HepG2 (cell line): ENCODE measurements at regions of chr1 and their contacts with region 1.

Region 1: DNA sequence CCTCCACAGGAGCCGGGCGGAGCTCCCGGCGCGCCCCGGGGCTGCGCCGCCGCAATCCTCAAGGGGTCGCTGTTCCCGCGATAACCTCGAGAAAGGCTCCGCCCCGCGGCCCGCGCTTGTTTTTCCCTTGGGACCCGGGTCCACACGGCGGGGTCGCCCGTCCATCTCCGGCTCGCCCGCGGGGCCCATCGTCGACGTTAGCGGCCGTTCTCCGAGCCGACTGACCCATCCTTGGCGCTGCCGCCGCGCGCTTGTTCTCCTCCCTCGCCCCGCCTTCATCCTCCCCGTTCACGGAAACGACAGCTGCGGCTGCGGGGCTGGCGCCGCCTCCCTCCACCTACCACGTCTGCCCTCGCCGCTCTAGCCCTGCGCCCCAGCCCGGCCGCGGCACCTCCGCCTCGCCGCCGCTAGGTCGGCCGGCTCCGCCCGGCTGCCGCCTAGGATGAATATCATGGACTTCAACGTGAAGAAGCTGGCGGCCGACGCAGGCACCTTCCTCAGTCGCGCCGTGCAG is at the start of gene SH3GLB1:
- DNase-seq: peak; percentile 74
- ATAC-seq: peak; percentile 97
- H3K4me3 ChIP-seq: peak within 1 kb of the TSS; percentile 84 to 97 (median 95)
- H3K27ac ChIP-seq: peak within 1 kb of the TSS; percentile 90
- H3K4me1 ChIP-seq: peaks cover 34% of the 10 kb centered on the region
- H3K27me3 ChIP-seq: no peaks in the 10 kb centered on the region; a peak in 1 of 5 replicates
- CTCF ChIP-seq: peak; percentile 88
- EP300 ChIP-seq: no peak
- POLR2A ChIP-seq: peak; percentile 73
- RAD21 ChIP-seq: peak; percentile 78
- total RNA-seq, gene SH3GLB1: 41.5 and 55.7 TPM in 2 replicates

Region 2: DNA sequence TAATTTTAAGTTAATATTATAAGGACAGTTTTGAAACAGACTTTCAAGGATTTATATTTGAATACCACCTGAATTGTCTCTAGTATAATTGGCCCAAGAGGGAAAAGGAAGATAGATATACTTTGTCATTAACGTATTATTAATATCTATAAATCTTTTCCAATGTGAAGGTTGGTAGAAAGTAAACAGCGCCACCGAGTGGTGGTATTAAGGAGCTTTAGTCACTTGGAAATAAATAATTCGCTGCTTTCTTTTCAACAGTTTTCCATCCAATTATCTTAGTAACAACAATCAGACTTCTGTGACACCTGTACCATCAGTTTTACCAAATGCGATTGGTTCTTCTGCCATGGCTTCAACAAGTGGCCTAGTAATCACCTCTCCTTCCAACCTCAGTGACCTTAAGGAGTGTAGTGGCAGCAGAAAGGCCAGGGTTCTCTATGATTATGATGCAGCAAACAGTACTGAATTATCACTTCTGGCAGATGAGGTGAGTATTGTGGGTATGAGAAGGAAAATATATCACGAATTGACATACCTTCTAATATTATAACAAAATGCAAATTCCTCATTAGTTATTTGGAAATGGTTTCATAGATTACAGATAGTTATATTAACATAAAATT is 37.5 kb after region 1 on chr1:
- CTCF ChIA-PET with region 1: interaction called, 3 read pairs
- POLR2A ChIA-PET with region 1: no interaction called
- in situ Hi-C with region 1: no loop called
- intact Hi-C with region 1: loop called (anchors 5 kb)
- DNase-seq: peak; percentile 13
- ATAC-seq: no peak
- H3K4me3 ChIP-seq: no peak overlapping the region
- H3K27ac ChIP-seq: no peak overlapping the region
- H3K4me1 ChIP-seq: peaks cover 9% of the 10 kb centered on the region
- H3K27me3 ChIP-seq: no peaks in the 10 kb centered on the region
- CTCF ChIP-seq: peak; percentile 32
- EP300 ChIP-seq: no peak
- POLR2A ChIP-seq: no peak
- RAD21 ChIP-seq: peak; percentile 10; the same call in 1 of the 2 replicates